ENCODE measurements at regions of chr16 and their contacts with region 1.

Region 1: DNA sequence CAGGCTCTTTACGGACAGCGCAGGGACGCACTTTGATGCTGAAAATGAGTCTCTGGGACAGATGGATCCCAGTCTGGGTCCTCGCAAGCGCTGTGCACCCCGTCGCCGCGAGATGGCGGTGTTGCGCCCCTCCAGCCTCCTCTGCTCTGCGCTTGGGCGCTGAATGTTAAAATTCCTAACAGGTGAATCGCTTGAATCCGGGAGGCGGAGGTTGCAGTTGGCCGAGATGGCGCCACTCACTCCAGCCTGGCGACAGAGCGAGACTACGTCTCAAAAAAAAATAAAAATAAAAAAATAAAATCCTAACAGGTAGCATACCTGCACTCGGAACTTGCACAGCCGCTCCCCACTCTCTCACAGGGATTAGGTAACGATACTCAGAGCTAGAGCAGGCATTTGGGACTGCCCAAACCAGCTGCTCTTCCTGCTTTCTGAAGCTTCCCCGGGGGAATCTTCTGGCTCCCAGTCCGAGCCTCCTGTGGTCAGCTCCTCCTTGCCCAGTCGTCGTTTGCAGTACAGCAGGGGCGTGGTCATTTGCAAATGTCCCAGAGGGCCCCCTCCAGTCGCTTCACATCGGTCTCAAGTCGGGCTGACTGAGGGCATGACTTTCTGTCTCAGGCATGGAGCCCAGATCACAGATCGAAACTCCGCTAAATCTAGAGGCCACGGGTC is 26.2 kb upstream of the OSGIN1 start:
- DNase-seq: no peak
- H3K4me3 ChIP-seq: peak overlapping the region; percentile 19; the same call in 1 of the 2 replicates
- CTCF ChIP-seq: peak; percentile 97

Region 2: GRCh38 chr16:83826146-83826913 is 100.5 kb before region 1 on chr16:
- CTCF ChIA-PET with region 1: interaction called, 12 read pairs
- POLR2A ChIA-PET with region 1: no interaction called
- DNase-seq: no peak
- H3K4me3 ChIP-seq: no peak overlapping the region
- CTCF ChIP-seq: peak; percentile 94

Region 3: DNA sequence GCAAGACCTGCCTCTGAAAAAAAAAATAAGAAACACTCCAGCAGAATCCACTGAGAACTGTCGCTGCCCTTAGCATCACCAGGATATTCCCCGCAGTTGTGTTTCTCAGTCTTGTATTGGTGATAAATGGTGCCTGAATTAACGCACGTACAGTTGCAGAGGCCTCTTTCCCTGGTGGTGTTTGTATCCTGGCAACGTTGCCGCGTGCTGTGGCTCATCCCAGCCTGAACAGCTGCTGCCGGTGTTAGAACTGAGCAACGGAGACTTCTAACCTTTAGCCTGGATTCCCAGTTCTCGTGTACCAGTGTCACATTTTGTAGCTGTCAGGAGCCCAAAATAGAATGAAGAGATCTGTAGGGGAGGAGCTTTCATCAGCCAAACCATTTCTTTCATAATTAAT is 23.1 kb before region 1 on chr16:
- CTCF ChIA-PET with region 1: interaction called, 28 read pairs
- POLR2A ChIA-PET with region 1: no interaction called
- DNase-seq: no peak
- H3K4me3 ChIP-seq: no peak overlapping the region
- CTCF ChIP-seq: no peak

Region 4: GRCh38 chr16:83913245-83913633 is 13.6 kb before region 1 on chr16:
- CTCF ChIA-PET with region 1: interaction called, 65 read pairs
- POLR2A ChIA-PET with region 1: no interaction called
- DNase-seq: no peak
- H3K4me3 ChIP-seq: no peak overlapping the region
- CTCF ChIP-seq: no peak

Region 5: GRCh38 chr16:83952940-83953795 is 26.3 kb after region 1 on chr16 and contains the start of gene OSGIN1:
- CTCF ChIA-PET with region 1: interaction called, 56 read pairs
- POLR2A ChIA-PET with region 1: interaction called, 4 read pairs
- DNase-seq: peak; percentile 34
- H3K4me3 ChIP-seq: peak within 1 kb of the TSS; percentile 69
- CTCF ChIP-seq: no peak

Region 6: GRCh38 chr16:84050316-84050715 is 123.5 kb after region 1 on chr16:
- CTCF ChIA-PET with region 1: no interaction called
- POLR2A ChIA-PET with region 1: no interaction called
- DNase-seq: no peak
- H3K4me3 ChIP-seq: no peak overlapping the region
- CTCF ChIP-seq: no peak

Measured in AG04449 (cell line).